ENCODE measurements at regions of chr22 and their contacts with region 1.

Region 1: GRCh38 chr22:24230911-24231656 is 13.8 kb downstream of the GGT5 start:
- DNase-seq: peak; percentile 18
- H3K4me3 ChIP-seq: no peak overlapping the region
- H3K27ac ChIP-seq: no peak overlapping the region
- H3K4me1 ChIP-seq: no peaks in the 10 kb centered on the region
- H3K27me3 ChIP-seq: no peaks in the 10 kb centered on the region
- CTCF ChIP-seq: peak; percentile 21 to 38
- POLR2A ChIP-seq: no peak

Region 2: GRCh38 chr22:24200616-24201212 is 30.4 kb before region 1 on chr22:
- CTCF ChIA-PET with region 1: interaction called, 17 read pairs
- POLR2A ChIA-PET with region 1: no interaction called
- dilution Hi-C with region 1: no loop called
- intact Hi-C with region 1: no loop called
- DNase-seq: peak; percentile 74
- H3K4me3 ChIP-seq: no peak overlapping the region
- H3K27ac ChIP-seq: peak overlapping the region; percentile 22
- H3K4me1 ChIP-seq: peaks cover 24% of the 10 kb centered on the region
- H3K27me3 ChIP-seq: no peaks in the 10 kb centered on the region
- CTCF ChIP-seq: no peak
- POLR2A ChIP-seq: no peak

Region 3: DNA sequence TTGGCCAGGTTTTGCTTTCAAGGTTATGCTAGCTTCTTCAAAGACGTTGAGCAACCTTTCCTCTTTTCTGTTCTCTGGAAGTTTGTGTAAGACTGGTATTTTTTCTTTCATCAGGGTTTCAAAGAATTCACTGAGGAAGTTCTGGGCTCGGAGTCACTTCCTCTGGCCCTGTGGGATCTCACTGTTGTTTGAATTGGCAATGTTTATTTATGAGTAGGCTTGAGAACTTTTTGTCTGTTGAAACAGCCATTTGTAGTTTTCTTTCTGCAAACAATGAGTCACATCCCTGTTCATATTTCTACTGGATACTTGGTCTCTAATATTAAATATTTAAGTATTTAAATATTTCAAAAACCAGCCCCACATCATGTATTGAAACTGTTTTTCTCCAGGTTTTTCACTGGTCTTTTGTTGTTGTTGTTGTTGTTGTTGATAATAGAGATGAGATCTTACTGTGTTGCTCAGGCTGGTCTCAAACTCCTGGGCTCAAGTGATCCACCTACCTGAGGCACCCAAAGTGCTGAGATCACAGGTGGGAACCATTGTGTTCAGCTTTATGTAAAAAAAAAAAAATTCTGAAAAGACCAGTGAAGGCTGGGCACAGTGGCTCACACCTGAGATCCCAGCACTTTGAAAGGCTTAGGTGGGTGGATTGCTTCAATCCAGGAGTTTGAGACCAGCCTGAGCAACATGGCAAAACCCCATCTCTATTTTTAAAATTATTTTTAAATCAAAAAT is 22.9 kb before region 1 on chr22:
- CTCF ChIA-PET with region 1: interaction called, 17 read pairs
- POLR2A ChIA-PET with region 1: no interaction called
- dilution Hi-C with region 1: no loop called
- intact Hi-C with region 1: no loop called
- DNase-seq: peak; percentile 98
- H3K4me3 ChIP-seq: peak overlapping the region in 1 of 3 experiments; percentile 46
- H3K27ac ChIP-seq: peak overlapping the region; percentile 99
- H3K4me1 ChIP-seq: peaks cover 43% of the 10 kb centered on the region
- H3K27me3 ChIP-seq: no peaks in the 10 kb centered on the region
- CTCF ChIP-seq: no peak
- POLR2A ChIP-seq: peak; percentile 61

Region 4: GRCh38 chr22:24244101-24244787 is 13.2 kb after region 1 on chr22:
- CTCF ChIA-PET with region 1: interaction called, 14 read pairs
- POLR2A ChIA-PET with region 1: no interaction called
- dilution Hi-C with region 1: no loop called
- intact Hi-C with region 1: no loop called
- DNase-seq: peak; percentile 56
- H3K4me3 ChIP-seq: peak overlapping the region in 2 of 3 experiments; percentile 32 to 53
- H3K27ac ChIP-seq: peak overlapping the region; percentile 53
- H3K4me1 ChIP-seq: peaks cover 56% of the 10 kb centered on the region
- H3K27me3 ChIP-seq: no peaks in the 10 kb centered on the region
- CTCF ChIP-seq: no peak
- POLR2A ChIP-seq: no peak